CD14-positive monocyte (primary cell): ENCODE measurements at regions of chr9 and their contacts with region 1.

Region 1: GRCh38 chr9:110256380-110257096 is at the start of gene TXN:
- DNase-seq: peak; percentile 90 to 96 (median 94)
- H3K4me3 ChIP-seq: peak within 1 kb of the TSS; percentile 64 to 88 (median 76)
- H3K4me3 Mint-ChIP-seq: peak within 1 kb of the TSS; percentile 96 to 97
- H3K27ac ChIP-seq: peak within 1 kb of the TSS; percentile 86 to 96
- H3K27ac Mint-ChIP-seq: peak within 1 kb of the TSS; percentile 97 to 100 (median 98)
- H3K4me1 ChIP-seq: peaks cover 36 to 40% of the 10 kb centered on the region in 2 donors
- H3K4me1 Mint-ChIP-seq: peaks cover 56% of the 10 kb centered on the region
- H3K27me3 ChIP-seq: no peaks in the 10 kb centered on the region
- H3K27me3 Mint-ChIP-seq: peaks cover 0 to 5% (median 2%) of the 10 kb centered on the region in 3 donors
- CTCF ChIP-seq: no peak
- polyA plus RNA-seq, gene TXN: 91.8 to 224 (median 209) TPM

Region 2: DNA sequence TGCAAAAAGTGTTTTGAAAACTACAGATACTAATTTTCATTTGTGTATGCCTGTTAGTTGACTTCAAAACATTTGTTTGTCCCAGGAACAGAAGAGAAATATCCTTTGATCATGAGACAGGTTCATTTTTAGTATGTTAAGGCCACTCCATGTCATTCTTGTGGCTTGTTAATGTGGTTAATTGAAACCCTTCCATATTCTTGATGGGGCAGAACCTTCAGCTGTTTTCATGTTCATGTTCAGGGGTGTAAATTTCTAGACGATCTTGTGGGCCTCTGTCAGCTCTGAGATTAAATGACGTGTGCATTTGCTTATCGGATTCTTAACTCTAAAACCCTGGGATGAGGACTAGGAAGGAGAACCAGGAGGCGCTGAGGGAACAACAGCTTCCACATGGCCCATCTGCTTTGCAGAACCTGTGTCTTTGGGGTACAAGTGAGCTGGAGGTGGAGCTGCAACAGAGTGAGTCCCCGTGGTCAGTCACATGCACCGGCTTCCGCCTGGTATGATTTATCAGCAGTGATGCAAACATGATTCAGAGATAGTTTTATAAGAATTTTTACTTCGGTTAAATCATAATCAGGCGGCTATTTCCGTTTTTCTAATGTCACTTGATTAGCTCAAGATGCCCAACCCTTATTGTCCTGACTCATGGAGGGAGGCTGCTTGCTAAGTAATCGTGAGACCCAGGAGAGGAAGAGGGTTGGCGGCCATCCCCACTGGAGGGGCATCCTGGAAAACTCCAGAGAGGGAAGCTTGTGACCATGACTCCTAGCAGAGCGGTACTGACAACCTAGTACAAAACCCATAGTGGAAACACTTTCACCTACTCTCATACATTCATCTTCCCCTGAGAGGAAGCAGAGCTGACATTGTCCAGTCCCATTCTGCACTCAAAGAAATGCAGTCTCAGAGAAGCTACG is 187.0 kb before region 1 on chr9:
- intact Hi-C with region 1: loop called in 1 of 2 experiments (anchors 10 kb)
- DNase-seq: peak; percentile 80 to 97 (median 82)
- H3K4me3 ChIP-seq: no peak overlapping the region
- H3K4me3 Mint-ChIP-seq: peak overlapping the region; percentile 58 to 64
- H3K27ac ChIP-seq: peak overlapping the region; percentile 9 to 63
- H3K27ac Mint-ChIP-seq: peak overlapping the region; percentile 72 to 88 (median 83)
- H3K4me1 ChIP-seq: peaks cover 35 to 43% of the 10 kb centered on the region in 2 donors
- H3K4me1 Mint-ChIP-seq: peaks cover 49% of the 10 kb centered on the region
- H3K27me3 ChIP-seq: no peaks in the 10 kb centered on the region
- H3K27me3 Mint-ChIP-seq: no peaks in the 10 kb centered on the region
- CTCF ChIP-seq: no peak

Region 3: DNA sequence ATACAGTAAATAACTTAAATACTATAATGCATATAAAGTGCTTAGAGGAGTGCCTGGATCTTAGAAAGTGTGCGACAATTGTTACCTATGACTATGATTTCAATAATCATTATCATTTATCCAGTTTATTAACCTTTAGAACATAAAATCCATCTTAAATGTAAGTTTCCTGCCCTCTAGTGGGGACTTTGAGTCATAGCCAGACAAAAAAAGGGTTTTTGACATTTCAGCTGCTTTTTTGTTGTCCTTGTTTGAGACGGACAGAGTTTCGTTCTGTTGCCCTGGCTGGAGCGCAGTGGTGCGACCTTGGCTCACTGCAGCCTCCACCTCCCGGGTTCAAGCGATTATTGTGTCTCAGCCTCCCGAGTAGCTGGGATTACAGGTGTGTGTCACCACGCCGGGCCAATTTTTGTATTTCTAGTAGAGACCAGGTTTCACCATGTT is 38.9 kb before region 1 on chr9:
- intact Hi-C with region 1: no loop called
- DNase-seq: peak in 2 of 3 donors; percentile 23 to 42
- H3K4me3 ChIP-seq: no peak overlapping the region
- H3K4me3 Mint-ChIP-seq: no peak overlapping the region
- H3K27ac ChIP-seq: no peak overlapping the region
- H3K27ac Mint-ChIP-seq: no peak overlapping the region
- H3K4me1 ChIP-seq: no peaks in the 10 kb centered on the region
- H3K4me1 Mint-ChIP-seq: peaks cover 2% of the 10 kb centered on the region
- H3K27me3 ChIP-seq: no peaks in the 10 kb centered on the region
- H3K27me3 Mint-ChIP-seq: no peaks in the 10 kb centered on the region
- CTCF ChIP-seq: peak; percentile 87

Region 4: GRCh38 chr9:110334183-110334582 is 77.6 kb after region 1 on chr9:
- intact Hi-C with region 1: loop called in 1 of 2 experiments (anchors 10 kb)
- DNase-seq: no peak
- H3K4me3 ChIP-seq: peak overlapping the region in 2 of 3 experiments; percentile 9 to 41
- H3K4me3 Mint-ChIP-seq: peak overlapping the region; percentile 39 to 74
- H3K27ac ChIP-seq: no peak overlapping the region
- H3K27ac Mint-ChIP-seq: peak overlapping the region in 6 of 7 donors; percentile 32 to 72 (median 54)
- H3K4me1 ChIP-seq: peaks cover 24 to 30% of the 10 kb centered on the region in 2 donors
- H3K4me1 Mint-ChIP-seq: peaks cover 32% of the 10 kb centered on the region
- H3K27me3 ChIP-seq: no peaks in the 10 kb centered on the region
- H3K27me3 Mint-ChIP-seq: peaks cover 0 to 4% (median 3%) of the 10 kb centered on the region in 3 donors
- CTCF ChIP-seq: no peak

Region 5: GRCh38 chr9:110476251-110476650 is 219.7 kb after region 1 on chr9:
- intact Hi-C with region 1: no loop called
- DNase-seq: no peak
- H3K4me3 ChIP-seq: no peak overlapping the region
- H3K4me3 Mint-ChIP-seq: no peak overlapping the region
- H3K27ac ChIP-seq: no peak overlapping the region
- H3K27ac Mint-ChIP-seq: no peak overlapping the region
- H3K4me1 ChIP-seq: no peaks in the 10 kb centered on the region
- H3K4me1 Mint-ChIP-seq: no peaks in the 10 kb centered on the region
- H3K27me3 ChIP-seq: no peaks in the 10 kb centered on the region
- H3K27me3 Mint-ChIP-seq: peaks cover 0 to 1% (median 0%) of the 10 kb centered on the region in 3 donors
- CTCF ChIP-seq: no peak

Region 6: GRCh38 chr9:110571801-110572485 is 315.4 kb after region 1 on chr9:
- intact Hi-C with region 1: no loop called
- DNase-seq: no peak
- H3K4me3 ChIP-seq: no peak overlapping the region
- H3K4me3 Mint-ChIP-seq: no peak overlapping the region
- H3K27ac ChIP-seq: no peak overlapping the region
- H3K27ac Mint-ChIP-seq: no peak overlapping the region
- H3K4me1 ChIP-seq: no peaks in the 10 kb centered on the region
- H3K4me1 Mint-ChIP-seq: no peaks in the 10 kb centered on the region
- H3K27me3 ChIP-seq: peaks cover 8 to 14% of the 10 kb centered on the region in 2 donors
- H3K27me3 Mint-ChIP-seq: peaks cover 10 to 30% (median 18%) of the 10 kb centered on the region in 3 donors
- CTCF ChIP-seq: no peak